HepG2 (cell line): ENCODE measurements at regions of chr10 and their contacts with region 1.

Region 1: GRCh38 chr10:101214446-101215396 is 14.5 kb downstream of the LBX1 start:
- DNase-seq: peak; percentile 50
- ATAC-seq: peak; percentile 75
- H3K4me3 ChIP-seq: peak overlapping the region in 2 of 3 experiments; percentile 41 to 63; a peak in 1 of 6 replicates
- H3K27ac ChIP-seq: no peak overlapping the region
- H3K4me1 ChIP-seq: peaks cover 36% of the 10 kb centered on the region
- H3K27me3 ChIP-seq: peaks cover 15 to 77% of the 10 kb centered on the region in 2 experiments; a peak in 4 of 5 replicates
- CTCF ChIP-seq: peak; percentile 91
- EP300 ChIP-seq: no peak
- POLR2A ChIP-seq: no peak
- RAD21 ChIP-seq: peak; percentile 56

Region 2: GRCh38 chr10:101238732-101239105 is 24.0 kb after region 1 on chr10:
- CTCF ChIA-PET with region 1: interaction called, 17 read pairs
- POLR2A ChIA-PET with region 1: no interaction called
- in situ Hi-C with region 1: no loop called
- intact Hi-C with region 1: no loop called
- DNase-seq: no peak
- ATAC-seq: peak; percentile 89
- H3K4me3 ChIP-seq: no peak overlapping the region
- H3K27ac ChIP-seq: no peak overlapping the region
- H3K4me1 ChIP-seq: no peaks in the 10 kb centered on the region
- H3K27me3 ChIP-seq: peaks cover 9 to 84% of the 10 kb centered on the region in 2 experiments
- CTCF ChIP-seq: peak; percentile 69
- EP300 ChIP-seq: no peak
- POLR2A ChIP-seq: no peak
- RAD21 ChIP-seq: peak; percentile 17; the same call in 1 of the 2 replicates

Region 3: DNA sequence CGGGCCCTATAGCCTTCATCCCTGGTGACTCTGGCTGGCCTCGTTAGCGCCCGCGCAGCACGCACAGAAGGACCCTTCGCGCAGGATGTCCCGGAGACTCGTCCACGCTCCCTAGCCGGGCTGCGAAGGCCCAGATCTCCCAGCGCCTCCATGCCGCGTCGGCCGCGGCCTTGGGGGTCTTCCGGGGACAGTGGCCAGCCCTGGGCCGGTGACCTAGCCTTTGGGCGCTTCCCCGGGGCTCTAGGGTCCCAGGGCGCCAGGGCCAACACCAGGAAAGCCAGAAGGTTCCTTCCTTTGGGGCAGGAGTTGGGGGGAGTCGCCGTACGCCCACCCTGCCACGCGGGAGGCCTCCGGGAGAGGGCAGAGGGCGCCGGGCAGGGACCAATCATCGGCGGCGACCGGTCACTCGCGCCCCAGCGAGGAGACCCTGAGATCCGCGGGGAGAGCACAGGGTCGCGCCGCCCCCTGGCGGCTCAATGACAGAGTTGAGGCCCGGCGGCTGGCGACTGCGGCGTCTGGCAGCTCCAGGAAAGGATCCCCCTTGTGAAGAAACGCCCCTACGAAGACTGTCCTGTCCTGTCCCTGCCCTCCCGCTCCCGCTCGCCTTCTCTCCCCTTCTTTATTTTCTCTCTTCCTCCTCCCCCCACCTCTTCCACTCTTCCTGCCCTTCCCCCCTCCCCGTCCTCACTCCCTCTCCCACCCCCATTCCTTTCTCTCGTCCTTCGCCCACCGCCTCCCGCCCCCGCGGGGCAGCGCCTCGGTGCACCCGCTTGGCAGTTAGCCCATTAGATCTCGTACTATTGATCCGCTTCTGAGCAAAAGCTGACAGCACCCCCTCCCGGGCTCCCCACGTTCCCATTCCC is 76.8 kb after region 1 on chr10:
- CTCF ChIA-PET with region 1: interaction called, 23 read pairs
- POLR2A ChIA-PET with region 1: no interaction called
- in situ Hi-C with region 1: loop called (anchors 5 kb)
- intact Hi-C with region 1: loop called (anchors 1 kb)
- DNase-seq: peak; percentile 30
- ATAC-seq: peak; percentile 87
- H3K4me3 ChIP-seq: peak overlapping the region; percentile 51 to 73 (median 57)
- H3K27ac ChIP-seq: no peak overlapping the region
- H3K4me1 ChIP-seq: peaks cover 24% of the 10 kb centered on the region
- H3K27me3 ChIP-seq: peaks cover 5 to 75% of the 10 kb centered on the region in 2 experiments
- CTCF ChIP-seq: peak; percentile 83
- EP300 ChIP-seq: no peak
- POLR2A ChIP-seq: no peak
- RAD21 ChIP-seq: peak; percentile 77

Region 4: GRCh38 chr10:101441541-101442455 is 227.1 kb after region 1 on chr10:
- CTCF ChIA-PET with region 1: interaction called, 3 read pairs
- POLR2A ChIA-PET with region 1: no interaction called
- in situ Hi-C with region 1: no loop called
- intact Hi-C with region 1: loop called (anchors 5 kb)
- DNase-seq: peak; percentile 73
- ATAC-seq: peak; percentile 96
- H3K4me3 ChIP-seq: no peak overlapping the region
- H3K27ac ChIP-seq: no peak overlapping the region
- H3K4me1 ChIP-seq: no peaks in the 10 kb centered on the region
- H3K27me3 ChIP-seq: no peaks in the 10 kb centered on the region
- CTCF ChIP-seq: peak; percentile 85
- EP300 ChIP-seq: no peak
- POLR2A ChIP-seq: no peak
- RAD21 ChIP-seq: peak; percentile 62; the same call in 1 of the 2 replicates

Region 5: DNA sequence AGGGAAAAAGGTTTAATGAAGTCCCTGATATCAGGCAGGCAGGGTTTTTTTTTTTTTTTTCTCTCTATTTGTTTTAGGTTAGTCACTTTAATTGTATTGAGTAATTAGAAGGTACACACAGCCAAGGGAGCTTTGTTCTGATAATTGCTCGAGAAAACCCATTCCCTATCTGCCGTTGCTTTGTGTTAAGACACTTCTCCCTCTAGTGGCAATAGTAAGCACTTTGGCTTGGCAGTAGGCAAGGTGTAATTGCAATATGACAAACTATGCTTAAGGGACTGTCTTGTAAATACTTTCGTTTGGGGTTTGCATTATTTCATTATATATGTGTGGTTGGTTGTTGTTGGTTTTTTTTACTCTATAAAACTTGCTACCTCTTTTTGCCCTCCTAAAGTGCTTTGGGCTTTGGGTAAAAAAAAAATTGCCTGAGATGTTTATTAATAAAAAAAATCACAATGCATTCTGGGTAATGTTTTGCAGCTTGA is 252.6 kb after region 1 on chr10:
- CTCF ChIA-PET with region 1: interaction called, 4 read pairs
- POLR2A ChIA-PET with region 1: no interaction called
- in situ Hi-C with region 1: no loop called
- intact Hi-C with region 1: loop called (anchors 5 kb)
- DNase-seq: peak; percentile 67
- ATAC-seq: peak; percentile 77
- H3K4me3 ChIP-seq: no peak overlapping the region
- H3K27ac ChIP-seq: no peak overlapping the region
- H3K4me1 ChIP-seq: no peaks in the 10 kb centered on the region
- H3K27me3 ChIP-seq: no peaks in the 10 kb centered on the region; a peak in 1 of 5 replicates
- CTCF ChIP-seq: peak; percentile 82
- EP300 ChIP-seq: no peak
- POLR2A ChIP-seq: no peak
- RAD21 ChIP-seq: peak; percentile 29; the same call in 1 of the 2 replicates

Region 6: GRCh38 chr10:101569838-101570766 is 355.4 kb after region 1 on chr10:
- CTCF ChIA-PET with region 1: interaction called, 3 read pairs
- POLR2A ChIA-PET with region 1: no interaction called
- in situ Hi-C with region 1: loop called (anchors 5 kb)
- intact Hi-C with region 1: loop called (anchors 1 kb)
- DNase-seq: peak; percentile 20
- ATAC-seq: peak; percentile 78
- H3K4me3 ChIP-seq: peak overlapping the region; percentile 68 to 85 (median 68)
- H3K27ac ChIP-seq: no peak overlapping the region
- H3K4me1 ChIP-seq: peaks cover 46% of the 10 kb centered on the region
- H3K27me3 ChIP-seq: peaks cover 0 to 47% of the 10 kb centered on the region in 2 experiments; a peak in 4 of 5 replicates
- CTCF ChIP-seq: peak; percentile 88
- EP300 ChIP-seq: no peak
- POLR2A ChIP-seq: no peak
- RAD21 ChIP-seq: peak; percentile 88

Region 7: DNA sequence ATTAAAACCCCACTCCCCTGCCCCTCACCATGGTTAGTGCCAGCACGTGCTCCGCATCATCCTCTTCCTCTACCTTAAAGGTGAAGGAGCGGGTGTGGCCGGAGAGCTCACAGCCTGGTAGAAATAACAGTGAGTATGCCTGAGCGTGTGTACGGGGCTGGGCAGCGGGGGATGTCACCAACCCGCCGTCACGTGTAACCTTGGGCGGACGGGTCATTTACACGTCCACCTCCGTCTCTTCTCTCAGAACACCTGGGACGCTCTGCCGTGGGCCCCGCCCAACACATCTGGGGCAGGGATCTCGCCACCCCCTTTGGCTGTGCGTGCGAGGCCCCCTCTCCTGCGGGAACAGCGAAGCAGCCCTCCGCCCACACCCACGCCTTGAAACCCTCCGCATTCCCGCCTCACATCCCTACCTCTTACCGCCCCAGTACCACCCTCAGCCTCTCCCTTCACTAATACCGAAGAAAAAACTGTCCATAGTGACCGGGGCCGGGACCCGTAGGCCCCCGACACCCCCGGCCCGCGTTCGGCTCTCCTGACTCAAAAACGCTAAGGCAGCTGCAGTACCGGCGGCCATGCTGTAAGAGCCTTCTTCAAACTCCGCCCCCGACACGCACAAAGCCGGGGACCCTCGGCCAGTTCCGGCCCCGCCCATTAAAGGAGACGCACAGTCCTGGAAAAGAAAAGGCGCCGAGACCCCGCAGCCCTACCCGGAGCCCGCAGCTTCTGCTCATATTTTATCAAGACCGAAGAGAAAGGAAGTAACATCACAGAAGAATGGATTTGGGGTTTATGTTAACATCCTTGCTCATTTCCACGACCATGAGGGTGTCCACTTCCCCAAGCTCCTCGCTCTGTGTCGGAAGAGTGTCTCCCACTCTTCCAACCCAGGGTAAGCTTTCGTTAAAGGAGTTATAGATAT is 568.4 kb after region 1 on chr10 and contains the start of gene NPM3:
- CTCF ChIA-PET with region 1: no interaction called
- POLR2A ChIA-PET with region 1: no interaction called
- in situ Hi-C with region 1: loop called (anchors 5 kb)
- intact Hi-C with region 1: loop called (anchors 2 kb)
- DNase-seq: peak; percentile 76
- ATAC-seq: peak; percentile 77
- H3K4me3 ChIP-seq: peak within 1 kb of the TSS; percentile 84 to 94 (median 88)
- H3K27ac ChIP-seq: peak within 1 kb of the TSS; percentile 55
- H3K4me1 ChIP-seq: peaks cover 50% of the 10 kb centered on the region
- H3K27me3 ChIP-seq: no peaks in the 10 kb centered on the region; a peak in 1 of 5 replicates
- CTCF ChIP-seq: no peak
- EP300 ChIP-seq: no peak
- POLR2A ChIP-seq: peak in 1 of 2 experiments; percentile 72
- RAD21 ChIP-seq: peak; percentile 4; the same call in 1 of the 2 replicates
- total RNA-seq, gene NPM3: 129 and 160 TPM in 2 replicates

Region 8: GRCh38 chr10:101818119-101818871 is 603.6 kb after region 1 on chr10 and contains the start of gene OGA:
- CTCF ChIA-PET with region 1: no interaction called
- POLR2A ChIA-PET with region 1: no interaction called
- in situ Hi-C with region 1: no loop called
- intact Hi-C with region 1: no loop called
- DNase-seq: peak; percentile 99
- ATAC-seq: peak; percentile 90
- H3K4me3 ChIP-seq: peak within 1 kb of the TSS; percentile 81 to 95 (median 89)
- H3K27ac ChIP-seq: peak within 1 kb of the TSS; percentile 91
- H3K4me1 ChIP-seq: peaks cover 38% of the 10 kb centered on the region
- H3K27me3 ChIP-seq: no peaks in the 10 kb centered on the region; a peak in 1 of 5 replicates
- CTCF ChIP-seq: no peak
- EP300 ChIP-seq: peak in 1 of 2 experiments; percentile 47; a peak in 2 of 4 replicates
- POLR2A ChIP-seq: peak; percentile 85 to 87
- RAD21 ChIP-seq: peak; percentile 23; the same call in 1 of the 2 replicates
- total RNA-seq, gene OGA: 33.2 and 36.5 TPM in 2 replicates